H1 (cell line): ENCODE measurements at regions of chr1 and their contacts with region 1.

Region 1: GRCh38 chr1:214261206-214262123 is 19.5 kb upstream of the SMYD2 start:
- DNase-seq: peak in 1 of 2 experiments; percentile 95
- H3K4me3 ChIP-seq: no peak overlapping the region
- H3K27ac ChIP-seq: no peak overlapping the region
- H3K4me1 ChIP-seq: peaks cover 0 to 3% (median 0%) of the 10 kb centered on the region in 4 experiments; a peak in 2 of 7 replicates
- H3K27me3 ChIP-seq: 0 out of 7 replicates have a peak, but pooled peaks cover 0 to 1% (median 0%) of the 10 kb centered on the region in 4 experiments
- CTCF ChIP-seq: peak; percentile 89 to 96 (median 95)
- EP300 ChIP-seq: no peak
- POLR2A ChIP-seq: no peak
- RAD21 ChIP-seq: peak; percentile 91 to 93

Region 2: DNA sequence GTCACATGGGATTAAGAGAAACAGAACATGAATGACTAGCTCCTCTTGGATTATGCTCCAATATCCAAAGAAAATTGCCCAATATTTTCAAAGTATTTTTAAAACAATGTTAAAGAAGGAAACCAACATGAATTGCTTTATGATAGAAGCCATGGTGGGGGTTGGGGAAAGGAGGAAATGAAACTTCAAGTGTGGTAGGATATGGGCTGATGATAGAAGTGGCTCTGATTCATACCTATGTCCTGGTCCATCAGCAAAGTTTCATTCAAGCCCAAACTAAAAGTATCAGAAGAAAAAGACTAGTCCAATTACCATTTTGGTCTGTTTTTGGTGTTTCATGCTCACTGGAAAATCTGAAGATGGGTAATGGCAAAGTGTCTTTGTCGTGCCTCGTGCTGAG is 377.8 kb before region 1 on chr1:
- CTCF ChIA-PET with region 1: no interaction called
- POLR2A ChIA-PET with region 1: no interaction called
- DNase-seq: no peak
- H3K4me3 ChIP-seq: no peak overlapping the region
- H3K27ac ChIP-seq: no peak overlapping the region
- H3K4me1 ChIP-seq: peaks cover 0 to 2% (median 0%) of the 10 kb centered on the region in 4 experiments; a peak in 1 of 7 replicates
- H3K27me3 ChIP-seq: no peaks in the 10 kb centered on the region
- CTCF ChIP-seq: no peak
- EP300 ChIP-seq: no peak
- POLR2A ChIP-seq: no peak
- RAD21 ChIP-seq: no peak

Region 3: DNA sequence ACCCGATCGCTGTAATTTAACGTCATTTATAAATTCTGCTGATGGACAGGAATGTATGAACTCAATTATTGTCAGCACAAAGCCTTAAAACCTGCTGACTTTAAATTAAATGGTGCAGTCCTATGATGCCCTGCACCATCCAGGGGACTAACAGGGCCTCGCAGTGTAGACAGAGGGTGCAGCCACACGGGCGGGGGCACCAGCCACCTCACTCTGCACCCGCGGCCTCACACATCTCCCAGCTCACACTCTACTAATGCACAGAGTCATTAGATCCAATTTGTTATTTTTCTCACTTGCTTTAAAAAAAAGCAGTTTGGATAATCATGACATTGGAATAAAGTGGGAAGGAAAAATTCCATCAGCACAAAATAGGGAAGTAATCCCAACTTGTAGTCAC is 224.0 kb before region 1 on chr1:
- CTCF ChIA-PET with region 1: no interaction called
- POLR2A ChIA-PET with region 1: no interaction called
- DNase-seq: no peak
- H3K4me3 ChIP-seq: no peak overlapping the region
- H3K27ac ChIP-seq: no peak overlapping the region
- H3K4me1 ChIP-seq: peaks cover 0 to 3% (median 0%) of the 10 kb centered on the region in 4 experiments; a peak in 1 of 7 replicates
- H3K27me3 ChIP-seq: no peaks in the 10 kb centered on the region
- CTCF ChIP-seq: no peak
- EP300 ChIP-seq: no peak
- POLR2A ChIP-seq: no peak
- RAD21 ChIP-seq: no peak

Region 4: GRCh38 chr1:214198571-214198970 is 62.9 kb before region 1 on chr1:
- CTCF ChIA-PET with region 1: interaction called, 13 read pairs
- POLR2A ChIA-PET with region 1: no interaction called
- DNase-seq: no peak
- H3K4me3 ChIP-seq: no peak overlapping the region
- H3K27ac ChIP-seq: no peak overlapping the region
- H3K4me1 ChIP-seq: peaks cover 0 to under 1% (median 0%) of the 10 kb centered on the region in 4 experiments; a peak in 1 of 7 replicates
- H3K27me3 ChIP-seq: no peaks in the 10 kb centered on the region
- CTCF ChIP-seq: no peak
- EP300 ChIP-seq: no peak
- POLR2A ChIP-seq: no peak
- RAD21 ChIP-seq: no peak

Region 5: GRCh38 chr1:214224611-214225354 is 36.7 kb before region 1 on chr1:
- CTCF ChIA-PET with region 1: interaction called, 21 read pairs
- POLR2A ChIA-PET with region 1: no interaction called
- DNase-seq: peak; percentile 13 to 54
- H3K4me3 ChIP-seq: peak overlapping the region; percentile 21 to 53 (median 44); a peak in 6 of 8 replicates
- H3K27ac ChIP-seq: no peak overlapping the region
- H3K4me1 ChIP-seq: peaks cover 2 to 14% (median 5%) of the 10 kb centered on the region in 4 experiments; a peak in 4 of 7 replicates
- H3K27me3 ChIP-seq: peaks cover 0 to 20% (median 15%) of the 10 kb centered on the region in 4 experiments; a peak in 4 of 7 replicates
- CTCF ChIP-seq: no peak
- EP300 ChIP-seq: no peak
- POLR2A ChIP-seq: no peak
- RAD21 ChIP-seq: no peak

Region 6: DNA sequence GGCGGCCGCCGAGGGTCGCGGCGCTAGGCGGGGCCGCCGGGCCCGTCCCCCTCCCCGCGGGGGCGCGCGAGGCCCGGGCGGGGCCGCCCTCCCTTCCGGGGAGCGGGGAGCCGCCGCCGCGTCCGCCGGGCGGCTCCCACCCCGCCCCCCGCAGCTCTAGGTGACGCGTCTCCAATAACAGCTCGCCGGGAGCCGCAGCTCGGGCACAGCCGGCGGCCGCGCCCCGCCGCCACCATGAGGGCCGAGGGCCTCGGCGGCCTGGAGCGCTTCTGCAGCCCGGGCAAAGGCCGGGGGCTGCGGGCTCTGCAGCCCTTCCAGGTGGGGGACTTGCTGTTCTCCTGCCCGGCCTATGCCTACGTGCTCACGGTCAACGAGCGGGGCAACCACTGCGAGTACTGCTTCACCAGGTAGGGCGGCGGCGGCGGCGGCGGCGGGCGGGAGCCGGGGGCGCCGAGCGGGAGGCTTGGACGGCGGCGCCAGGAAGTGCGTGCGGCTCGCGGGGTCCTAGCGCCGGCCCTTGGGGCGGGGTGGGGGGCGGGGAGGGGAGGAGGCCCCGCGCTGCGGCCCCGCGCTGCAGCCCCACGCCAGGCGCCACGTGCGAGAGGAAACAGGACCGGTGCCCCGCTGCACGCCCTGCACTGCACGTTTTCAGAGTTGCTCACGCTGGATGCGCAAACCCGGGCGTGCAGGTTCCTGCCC is 19.7 kb after region 1 on chr1 and contains the start of gene SMYD2:
- CTCF ChIA-PET with region 1: interaction called, 44 read pairs
- POLR2A ChIA-PET with region 1: no interaction called
- DNase-seq: peak in 1 of 2 experiments; percentile 85
- H3K4me3 ChIP-seq: peak within 1 kb of the TSS; percentile 70 to 79 (median 70)
- H3K27ac ChIP-seq: peak within 1 kb of the TSS; percentile 33; the same call in 1 of the 2 replicates
- H3K4me1 ChIP-seq: peaks cover 2 to 12% (median 4%) of the 10 kb centered on the region in 4 experiments; a peak in 4 of 7 replicates
- H3K27me3 ChIP-seq: peaks cover 8 to 38% (median 34%) of the 10 kb centered on the region in 4 experiments
- CTCF ChIP-seq: no peak
- EP300 ChIP-seq: no peak
- POLR2A ChIP-seq: no peak
- RAD21 ChIP-seq: no peak
- total RNA-seq, gene SMYD2: 4.4 and 5.2 TPM in 2 replicates

Region 7: DNA sequence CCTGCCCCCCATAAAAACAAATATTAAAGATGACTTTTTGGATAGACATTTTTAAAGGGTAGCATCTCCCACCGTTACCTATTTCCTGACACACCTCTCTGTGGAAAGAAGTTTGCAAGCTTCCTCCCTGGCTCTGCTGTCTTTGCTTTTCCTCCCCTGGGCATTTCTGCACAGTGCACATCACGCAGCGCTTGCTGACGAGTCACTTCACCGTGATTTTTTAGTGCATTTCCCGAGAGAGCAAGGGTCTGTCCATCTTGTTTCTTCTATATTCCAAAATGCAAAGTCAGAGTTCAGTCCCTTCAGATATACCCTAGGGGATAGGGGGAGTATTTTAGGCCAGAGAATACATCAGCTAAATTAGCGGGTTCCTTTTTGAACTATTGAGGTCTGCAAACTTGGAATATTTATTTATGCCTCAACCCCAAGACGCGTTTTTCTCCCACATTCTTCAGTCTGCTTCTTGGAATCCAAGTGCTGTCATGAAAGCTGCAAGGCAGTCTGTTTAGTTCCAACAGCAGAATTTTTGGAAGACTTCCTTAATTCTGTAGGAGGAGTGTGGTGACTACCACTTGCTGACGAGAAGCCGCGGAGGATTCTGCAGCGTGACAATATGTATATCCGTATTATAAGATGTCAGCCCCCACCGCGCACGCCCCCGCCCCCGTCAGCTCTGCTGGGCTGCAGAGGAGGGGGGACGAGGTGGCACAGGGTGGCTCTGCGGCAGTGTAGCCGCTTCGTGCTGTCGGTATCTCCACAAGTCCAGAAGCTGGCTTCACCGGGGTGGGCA is 41.9 kb after region 1 on chr1:
- CTCF ChIA-PET with region 1: interaction called, 22 read pairs
- POLR2A ChIA-PET with region 1: no interaction called
- DNase-seq: no peak
- H3K4me3 ChIP-seq: no peak overlapping the region
- H3K27ac ChIP-seq: no peak overlapping the region
- H3K4me1 ChIP-seq: peaks cover 0 to 3% (median 1%) of the 10 kb centered on the region in 4 experiments; a peak in 4 of 7 replicates
- H3K27me3 ChIP-seq: peaks cover 0 to 3% (median 0%) of the 10 kb centered on the region in 4 experiments; a peak in 1 of 7 replicates
- CTCF ChIP-seq: no peak
- EP300 ChIP-seq: no peak
- POLR2A ChIP-seq: no peak
- RAD21 ChIP-seq: no peak

Region 8: DNA sequence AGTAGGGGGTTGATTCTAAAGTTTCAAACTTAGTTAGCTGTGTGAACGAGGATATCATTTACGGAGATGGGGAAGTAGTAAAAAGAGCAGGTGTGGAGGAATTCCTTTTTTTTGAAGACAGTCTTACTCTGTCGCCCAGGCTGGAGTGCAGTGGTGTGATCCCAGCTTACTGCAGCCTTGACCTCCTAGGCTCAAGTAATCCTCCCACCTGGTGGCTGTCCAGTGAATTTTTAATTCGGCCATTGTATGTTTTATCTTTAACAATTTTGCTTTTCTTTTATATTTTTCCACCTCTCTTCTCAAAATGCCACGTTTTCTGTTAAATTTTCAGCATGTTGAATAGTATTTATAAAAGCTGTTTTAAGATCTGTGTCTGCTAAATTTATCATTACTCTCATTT is 329.2 kb after region 1 on chr1:
- CTCF ChIA-PET with region 1: interaction called, 20 read pairs
- POLR2A ChIA-PET with region 1: no interaction called
- DNase-seq: no peak
- H3K4me3 ChIP-seq: no peak overlapping the region
- H3K27ac ChIP-seq: no peak overlapping the region
- H3K4me1 ChIP-seq: no peaks in the 10 kb centered on the region
- H3K27me3 ChIP-seq: no peaks in the 10 kb centered on the region
- CTCF ChIP-seq: peak in 2 of 3 experiments; percentile 6 to 9; a peak in 1 of 4 replicates
- EP300 ChIP-seq: no peak
- POLR2A ChIP-seq: no peak
- RAD21 ChIP-seq: no peak; a peak in 1 of 4 replicates